ENCODE measurements at regions of chr10 and their contacts with region 1.

Region 1: DNA sequence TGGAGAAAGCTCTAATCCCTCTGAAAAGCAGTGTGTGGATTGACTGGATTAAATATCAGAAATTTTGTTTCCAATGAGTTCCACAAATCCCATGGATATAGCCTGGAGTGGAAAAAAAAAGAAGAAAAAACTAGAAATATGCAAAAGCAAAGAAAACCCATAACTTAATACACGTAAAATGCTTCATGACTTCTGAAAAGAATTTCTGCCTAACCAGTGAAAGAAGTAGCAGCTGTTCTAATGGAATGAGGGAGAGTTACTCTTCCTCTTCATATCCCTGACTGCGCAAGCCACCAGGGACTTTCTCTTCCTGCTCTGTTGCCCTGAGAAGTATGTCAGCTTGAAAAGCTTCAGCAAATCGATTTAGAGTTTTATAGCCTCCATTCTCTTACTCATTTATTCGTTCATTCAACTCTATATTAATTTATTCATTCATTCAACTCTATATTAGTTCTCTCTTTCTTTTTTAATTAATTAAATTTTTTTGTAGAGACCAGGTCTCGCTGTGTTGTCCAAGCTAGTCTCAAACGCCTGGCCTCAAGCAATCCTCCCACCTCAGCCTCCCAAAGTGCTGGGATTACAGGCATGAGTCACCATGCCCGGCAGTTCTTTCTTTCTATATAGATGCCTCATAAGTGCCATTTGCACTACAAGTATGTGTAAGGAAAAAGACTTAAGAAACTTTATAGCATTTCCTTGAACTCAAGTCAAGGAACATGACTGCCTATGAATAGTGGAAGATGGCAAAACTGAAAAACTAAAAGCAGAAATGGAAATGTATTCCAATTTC is 447.3 kb upstream of the NRP1 start:
- DNase-seq: no peak
- H3K4me3 Mint-ChIP-seq: no peak overlapping the region
- H3K27ac Mint-ChIP-seq: no peak overlapping the region
- H3K4me1 Mint-ChIP-seq: no peaks in the 10 kb centered on the region
- H3K27me3 Mint-ChIP-seq: peaks cover 4% of the 10 kb centered on the region

Region 2: DNA sequence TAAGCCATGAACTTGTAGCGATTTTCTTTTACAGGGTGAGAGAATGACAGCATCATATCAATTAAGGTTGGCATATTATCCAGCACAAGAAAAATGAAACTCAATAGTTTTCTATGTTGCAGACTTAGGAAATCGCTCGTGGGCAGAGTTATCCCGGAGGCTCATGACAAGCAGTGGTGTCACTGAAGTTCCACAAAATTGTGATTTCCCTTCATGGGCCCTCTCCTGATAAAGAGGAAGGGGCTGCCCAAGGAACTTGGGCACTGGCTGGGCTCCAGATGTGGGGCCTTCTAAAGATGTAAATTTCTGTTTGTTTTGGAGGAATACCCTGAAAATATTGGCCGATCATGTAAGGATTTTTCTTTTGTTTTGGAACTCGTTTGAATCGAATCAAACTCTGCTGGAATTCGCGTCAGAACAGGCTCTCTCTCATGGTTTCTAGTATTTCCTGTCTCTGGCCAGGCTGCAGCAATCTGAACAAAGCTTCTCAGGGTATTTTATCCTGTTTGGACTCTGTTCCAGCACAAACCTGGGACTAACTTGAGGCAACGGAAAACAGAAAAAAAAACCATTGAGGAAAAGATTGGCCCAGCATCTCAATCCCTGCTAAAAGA is 106.7 kb before region 1 on chr10:
- CTCF ChIA-PET with region 1: no interaction called
- POLR2A ChIA-PET with region 1: no interaction called
- intact Hi-C with region 1: loop called (anchors 10 kb)
- DNase-seq: no peak
- H3K4me3 Mint-ChIP-seq: no peak overlapping the region
- H3K27ac Mint-ChIP-seq: no peak overlapping the region
- H3K4me1 Mint-ChIP-seq: no peaks in the 10 kb centered on the region
- H3K27me3 Mint-ChIP-seq: no peaks in the 10 kb centered on the region

Region 3: DNA sequence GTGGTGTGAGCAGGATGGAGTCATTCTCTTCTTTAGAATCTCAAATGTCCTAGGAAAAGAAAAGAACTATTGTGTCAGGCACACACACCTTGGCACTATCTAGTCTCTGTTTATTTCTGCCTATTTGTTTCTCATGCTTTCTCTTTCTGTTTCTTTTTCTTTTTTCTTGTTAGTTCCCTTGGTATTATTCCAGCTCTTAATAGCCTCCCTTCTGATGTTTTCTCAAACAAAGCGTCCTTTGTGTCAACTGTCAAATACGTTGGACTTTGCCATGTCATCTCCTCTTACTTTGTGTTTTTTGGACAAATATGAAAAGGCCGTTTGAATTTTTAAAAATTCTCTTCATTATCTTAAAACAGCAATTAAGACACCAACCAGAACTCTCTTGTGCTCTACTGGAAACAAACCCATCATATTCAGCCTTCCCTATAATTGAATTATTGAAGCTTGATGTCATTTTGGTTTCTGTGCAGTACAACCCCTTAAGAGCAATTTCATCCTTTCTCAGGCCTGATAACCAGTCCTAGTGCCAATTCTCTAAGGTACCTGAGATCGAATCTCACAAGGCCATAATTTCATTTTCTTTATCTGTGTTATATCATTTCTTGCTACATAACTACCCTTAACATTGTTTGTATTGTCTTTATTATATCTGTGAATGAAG is 50.5 kb after region 1 on chr10:
- CTCF ChIA-PET with region 1: no interaction called
- POLR2A ChIA-PET with region 1: no interaction called
- intact Hi-C with region 1: no loop called
- DNase-seq: no peak
- H3K4me3 Mint-ChIP-seq: no peak overlapping the region
- H3K27ac Mint-ChIP-seq: no peak overlapping the region
- H3K4me1 Mint-ChIP-seq: no peaks in the 10 kb centered on the region
- H3K27me3 Mint-ChIP-seq: no peaks in the 10 kb centered on the region

Measured in activated CD4-positive, alpha-beta memory T cell treated with anti-CD3 and anti-CD28 coated beads for 36 hours (primary cell).